Activated CD8-positive, alpha-beta T cell treated with anti-CD3 and anti-CD28 coated beads for 36 hours (primary cell): ENCODE measurements at regions of chr11 and their contacts with region 1.

Region 1: DNA sequence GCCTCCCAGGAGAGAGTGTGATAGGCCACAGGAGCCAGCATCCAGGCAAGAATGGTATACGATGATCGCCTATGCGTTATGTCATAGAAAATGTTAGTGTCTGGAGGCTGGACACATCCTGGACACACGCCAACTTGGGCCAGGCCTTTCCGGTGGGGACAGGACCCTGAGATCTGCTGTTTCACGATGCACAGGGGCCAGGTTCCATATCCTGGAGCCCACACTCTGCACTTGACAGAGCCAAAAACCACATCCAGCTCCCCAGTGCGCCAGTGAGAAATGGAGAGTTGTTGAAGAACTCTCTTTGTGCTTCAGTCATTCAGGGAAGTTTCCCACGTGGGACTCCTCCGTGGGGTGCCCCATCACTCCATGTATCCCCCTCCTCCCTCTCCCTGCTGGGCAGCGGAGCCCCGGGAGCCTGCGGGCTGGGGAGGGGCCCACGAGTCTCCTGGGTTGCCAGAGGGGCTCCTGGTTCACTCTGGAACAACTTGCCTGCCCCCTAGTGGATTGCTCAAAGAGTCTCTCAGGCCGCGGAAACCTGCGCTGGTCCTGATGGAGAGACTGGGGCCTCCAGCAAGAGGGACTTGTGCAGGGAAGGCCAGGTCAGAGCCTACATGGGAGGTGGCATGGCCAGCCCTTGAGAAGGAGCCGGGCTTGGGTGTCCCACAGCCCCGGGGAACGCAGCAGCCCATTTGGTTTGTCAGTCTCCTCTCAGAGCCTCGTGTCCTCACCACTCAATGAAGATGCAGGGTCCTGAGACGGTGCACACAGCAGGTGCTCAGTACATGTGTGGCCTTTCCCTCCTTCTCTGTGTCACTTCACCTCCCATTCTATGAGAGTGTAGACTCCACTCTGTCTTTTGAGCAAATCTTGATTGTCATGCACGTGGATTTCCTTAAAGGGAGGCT is 10.2 kb upstream of the LRRC32 start:
- DNase-seq: peak; percentile 79
- ATAC-seq: peak; percentile 78
- H3K4me3 Mint-ChIP-seq: no peak overlapping the region
- H3K27ac Mint-ChIP-seq: no peak overlapping the region
- H3K4me1 Mint-ChIP-seq: peaks cover 35% of the 10 kb centered on the region
- H3K27me3 Mint-ChIP-seq: peaks cover 7% of the 10 kb centered on the region
- CTCF ChIP-seq: peak; percentile 93

Region 2: GRCh38 chr11:76588455-76589325 is 92.1 kb before region 1 on chr11:
- CTCF ChIA-PET with region 1: interaction called, 16 read pairs
- POLR2A ChIA-PET with region 1: interaction called, 3 read pairs
- intact Hi-C with region 1: loop called (anchors 5 kb)
- DNase-seq: peak; percentile 90
- ATAC-seq: peak; percentile 84
- H3K4me3 Mint-ChIP-seq: no peak overlapping the region
- H3K27ac Mint-ChIP-seq: peak overlapping the region; percentile 84
- H3K4me1 Mint-ChIP-seq: peaks cover 55% of the 10 kb centered on the region
- H3K27me3 Mint-ChIP-seq: peaks cover 7% of the 10 kb centered on the region
- CTCF ChIP-seq: no peak

Region 3: DNA sequence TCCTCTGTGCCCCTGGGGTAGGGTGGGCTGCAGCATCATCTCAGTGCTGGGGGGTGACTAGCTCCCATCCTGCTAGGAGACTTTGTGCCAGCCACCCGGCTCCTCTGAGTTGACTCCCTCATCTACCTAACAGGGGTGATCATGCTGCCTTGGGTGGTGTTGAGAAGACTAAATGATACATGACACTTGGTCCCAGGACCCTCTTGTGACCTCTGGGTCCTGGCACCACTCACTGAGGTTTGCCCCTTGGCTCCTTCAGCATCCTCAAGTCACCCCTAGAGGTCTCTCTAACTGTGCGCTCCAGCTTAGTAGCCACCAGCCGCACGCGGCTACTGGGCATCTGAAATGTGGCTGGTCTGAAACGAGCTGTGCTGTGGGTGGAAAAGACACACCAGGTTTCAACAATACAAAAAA is 82.3 kb before region 1 on chr11:
- CTCF ChIA-PET with region 1: interaction called, 45 read pairs
- POLR2A ChIA-PET with region 1: no interaction called
- intact Hi-C with region 1: no loop called
- DNase-seq: peak; percentile 65
- ATAC-seq: peak; percentile 87
- H3K4me3 Mint-ChIP-seq: no peak overlapping the region
- H3K27ac Mint-ChIP-seq: peak overlapping the region; percentile 63
- H3K4me1 Mint-ChIP-seq: peaks cover 19% of the 10 kb centered on the region
- H3K27me3 Mint-ChIP-seq: peaks cover 3% of the 10 kb centered on the region
- CTCF ChIP-seq: peak; percentile 56

Region 4: GRCh38 chr11:76664578-76665061 is 16.2 kb before region 1 on chr11:
- CTCF ChIA-PET with region 1: interaction called, 11 read pairs
- POLR2A ChIA-PET with region 1: interaction called, 3 read pairs
- intact Hi-C with region 1: no loop called
- DNase-seq: peak; percentile 61
- ATAC-seq: peak; percentile 78
- H3K4me3 Mint-ChIP-seq: no peak overlapping the region
- H3K27ac Mint-ChIP-seq: peak overlapping the region; percentile 83
- H3K4me1 Mint-ChIP-seq: peaks cover 29% of the 10 kb centered on the region
- H3K27me3 Mint-ChIP-seq: peaks cover 8% of the 10 kb centered on the region
- CTCF ChIP-seq: no peak